Calu3 (cell line): ENCODE measurements at regions of chr3 and their contacts with region 1.

Region 1: GRCh38 chr3:33883538-33883950 is 85.1 kb downstream of the PDCD6IP start:
- DNase-seq: peak; percentile 41
- H3K4me3 Mint-ChIP-seq: no peak overlapping the region
- H3K27ac Mint-ChIP-seq: no peak overlapping the region
- H3K4me1 Mint-ChIP-seq: no peaks in the 10 kb centered on the region
- H3K27me3 Mint-ChIP-seq: peaks cover 33% of the 10 kb centered on the region
- CTCF ChIP-seq: peak; percentile 46

Region 2: GRCh38 chr3:34012102-34012461 is 128.5 kb after region 1 on chr3:
- CTCF ChIA-PET with region 1: interaction called, 5 read pairs
- intact Hi-C with region 1: loop called (anchors 10 kb)
- DNase-seq: peak; percentile 59
- H3K4me3 Mint-ChIP-seq: no peak overlapping the region
- H3K27ac Mint-ChIP-seq: peak overlapping the region; percentile 27
- H3K4me1 Mint-ChIP-seq: no peaks in the 10 kb centered on the region
- H3K27me3 Mint-ChIP-seq: no peaks in the 10 kb centered on the region
- CTCF ChIP-seq: no peak

Region 3: GRCh38 chr3:34260271-34261006 is 376.9 kb after region 1 on chr3:
- CTCF ChIA-PET with region 1: interaction called, 6 read pairs
- intact Hi-C with region 1: loop called (anchors 10 kb)
- DNase-seq: peak; percentile 76
- H3K4me3 Mint-ChIP-seq: no peak overlapping the region
- H3K27ac Mint-ChIP-seq: no peak overlapping the region
- H3K4me1 Mint-ChIP-seq: peaks cover 17% of the 10 kb centered on the region
- H3K27me3 Mint-ChIP-seq: peaks cover 15% of the 10 kb centered on the region
- CTCF ChIP-seq: peak; percentile 37